Activated naive CD4-positive, alpha-beta T cell treated with anti-CD3 and anti-CD28 coated beads for 36 hours (primary cell): ENCODE measurements at regions of chr15 and their contacts with region 1.

Region 1: DNA sequence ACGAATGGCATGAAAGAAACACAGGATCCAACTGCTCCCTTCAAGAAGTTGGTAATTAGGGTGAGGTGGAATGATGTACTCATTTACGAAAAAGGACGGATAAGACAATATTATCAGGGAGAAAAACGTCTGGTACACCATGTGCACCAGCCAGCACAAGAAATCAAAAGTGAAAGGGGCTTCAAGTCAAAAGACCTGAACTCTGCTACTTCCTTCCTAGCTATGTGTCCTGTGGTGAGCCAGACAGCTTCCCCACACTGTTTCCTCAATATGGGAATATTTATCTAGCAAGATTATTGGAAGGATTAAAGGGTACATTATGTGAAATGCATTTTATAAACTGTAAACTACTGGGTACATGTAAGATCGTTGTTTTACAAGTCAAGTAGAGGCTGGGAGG is 33.9 kb downstream of the RAB27A start:
- DNase-seq: no peak
- H3K4me3 Mint-ChIP-seq: peak overlapping the region; percentile 61
- H3K27ac Mint-ChIP-seq: peak overlapping the region; percentile 82
- H3K4me1 Mint-ChIP-seq: peaks cover 73% of the 10 kb centered on the region
- H3K27me3 Mint-ChIP-seq: no peaks in the 10 kb centered on the region

Region 2: GRCh38 chr15:55241891-55242290 is 13.8 kb before region 1 on chr15:
- CTCF ChIA-PET with region 1: no interaction called
- intact Hi-C with region 1: loop called (anchors 1 kb)
- DNase-seq: no peak
- H3K4me3 Mint-ChIP-seq: no peak overlapping the region
- H3K27ac Mint-ChIP-seq: peak overlapping the region; percentile 79
- H3K4me1 Mint-ChIP-seq: peaks cover 75% of the 10 kb centered on the region
- H3K27me3 Mint-ChIP-seq: no peaks in the 10 kb centered on the region

Region 3: GRCh38 chr15:55267401-55268175 is 11.9 kb after region 1 on chr15:
- CTCF ChIA-PET with region 1: interaction called, 4 read pairs
- intact Hi-C with region 1: loop called (anchors 1 kb)
- DNase-seq: peak; percentile 81
- H3K4me3 Mint-ChIP-seq: peak overlapping the region; percentile 64
- H3K27ac Mint-ChIP-seq: peak overlapping the region; percentile 89
- H3K4me1 Mint-ChIP-seq: peaks cover 54% of the 10 kb centered on the region
- H3K27me3 Mint-ChIP-seq: no peaks in the 10 kb centered on the region

Region 4: DNA sequence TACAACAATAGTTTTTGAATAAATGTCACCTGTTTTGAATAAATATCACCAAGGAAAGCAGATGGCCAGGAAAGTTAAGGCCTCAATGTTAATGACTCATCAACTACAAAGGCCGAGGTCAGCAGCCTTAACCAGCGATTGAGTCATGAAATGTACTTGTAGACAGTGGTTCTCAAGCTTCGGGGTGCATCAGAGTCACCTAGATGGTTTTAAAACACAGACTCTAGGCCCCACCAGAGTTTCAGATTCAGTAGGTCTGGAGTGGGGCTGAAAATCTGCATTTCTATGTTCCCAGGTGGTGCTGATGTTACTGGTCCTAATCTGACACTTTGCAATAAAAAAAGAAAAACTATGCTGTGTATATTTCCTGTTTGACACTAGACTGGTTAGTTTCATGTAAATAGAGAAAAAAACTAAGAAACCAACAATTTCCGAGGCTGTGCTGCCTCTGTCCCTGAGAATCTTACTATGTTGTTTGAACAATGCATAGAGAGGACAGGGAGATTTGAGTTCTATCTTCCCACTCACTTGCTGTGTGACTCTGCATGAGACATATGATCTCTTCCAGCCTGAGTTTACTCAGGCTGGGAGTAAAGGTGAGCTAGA is 24.1 kb after region 1 on chr15:
- CTCF ChIA-PET with region 1: no interaction called
- intact Hi-C with region 1: loop called (anchors 1 kb)
- DNase-seq: peak; percentile 72
- H3K4me3 Mint-ChIP-seq: peak overlapping the region; percentile 31
- H3K27ac Mint-ChIP-seq: peak overlapping the region; percentile 90
- H3K4me1 Mint-ChIP-seq: peaks cover 95% of the 10 kb centered on the region
- H3K27me3 Mint-ChIP-seq: no peaks in the 10 kb centered on the region